CD4-positive, alpha-beta T cell (primary cell): ENCODE measurements at regions of chr11 and their contacts with region 1.

Region 1: GRCh38 chr11:10307442-10308207 is 2.8 kb downstream of the ADM start:
- DNase-seq: peak; percentile 70 to 92 (median 80)
- ATAC-seq: peak; percentile 66
- H3K4me3 ChIP-seq: peak overlapping the region; percentile 63
- H3K4me3 Mint-ChIP-seq: peak overlapping the region; percentile 95
- H3K27ac ChIP-seq: no peak overlapping the region
- H3K27ac Mint-ChIP-seq: no peak overlapping the region
- H3K4me1 ChIP-seq: peaks cover 56% of the 10 kb centered on the region
- H3K4me1 Mint-ChIP-seq: peaks cover 40% of the 10 kb centered on the region
- H3K27me3 ChIP-seq: peaks cover 32 to 45% of the 10 kb centered on the region in 2 experiments
- H3K27me3 Mint-ChIP-seq: peaks cover 80% of the 10 kb centered on the region
- CTCF ChIP-seq: peak; percentile 98

Region 2: DNA sequence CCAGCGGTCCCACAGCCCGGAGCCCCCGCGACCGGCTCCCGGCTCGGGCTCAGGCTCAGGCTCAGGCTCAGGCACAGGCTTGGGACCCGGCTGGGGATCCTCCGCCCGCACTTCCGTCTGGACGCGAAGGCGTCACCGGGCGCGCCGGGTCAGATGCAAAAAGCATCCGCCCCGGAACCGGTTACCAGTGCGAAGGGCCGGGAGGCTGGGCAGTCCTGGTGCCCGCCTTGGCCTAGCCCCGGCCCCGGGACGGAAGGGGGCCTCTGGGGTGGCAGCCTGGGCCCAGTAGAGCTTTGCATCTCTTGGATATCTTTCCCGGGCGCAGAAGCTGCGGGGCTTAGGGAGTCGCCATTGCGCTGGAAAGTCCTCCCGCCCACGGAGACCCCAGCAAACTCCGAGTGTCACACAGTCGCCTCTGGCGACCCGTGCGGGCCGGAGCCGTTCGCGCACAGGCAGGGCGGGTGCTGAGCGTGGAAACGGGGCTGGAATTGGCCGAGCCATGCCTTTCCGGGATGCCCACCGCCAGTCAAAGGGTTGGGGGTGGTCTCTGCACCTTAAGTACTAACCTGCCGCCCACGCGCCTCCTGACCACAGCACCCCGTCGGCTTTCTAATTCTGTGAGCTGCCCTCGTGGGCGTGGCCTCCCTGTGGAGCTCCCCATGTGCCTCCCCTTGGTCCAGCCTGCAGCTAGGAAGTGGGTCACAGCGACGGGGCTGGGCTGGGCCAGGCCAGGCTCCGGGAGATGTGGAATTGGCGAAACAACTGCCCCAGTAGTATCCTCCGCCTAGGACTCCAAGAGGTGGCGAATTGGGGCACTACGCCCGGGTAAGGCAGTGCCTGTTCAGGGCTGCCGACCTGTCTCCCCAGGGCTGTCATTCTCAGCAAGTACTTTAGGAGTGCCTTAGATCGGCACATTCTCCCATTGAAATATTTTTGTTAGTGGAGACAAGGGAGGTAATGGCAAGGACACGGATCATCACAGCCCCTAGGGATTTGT is 1343.0 kb before region 1 on chr11 and contains the start of gene TMEM9B:
- CTCF ChIA-PET with region 1: no interaction called
- POLR2A ChIA-PET with region 1: no interaction called
- intact Hi-C with region 1: loop called in 1 of 2 experiments (anchors 10 kb)
- DNase-seq: peak; percentile 50 to 87 (median 70)
- ATAC-seq: peak; percentile 72
- H3K4me3 ChIP-seq: peak within 1 kb of the TSS; percentile 98
- H3K4me3 Mint-ChIP-seq: peak within 1 kb of the TSS; percentile 97
- H3K27ac ChIP-seq: peak within 1 kb of the TSS; percentile 91 to 96
- H3K27ac Mint-ChIP-seq: peak within 1 kb of the TSS; percentile 97
- H3K4me1 ChIP-seq: peaks cover 28% of the 10 kb centered on the region
- H3K4me1 Mint-ChIP-seq: peaks cover 35% of the 10 kb centered on the region
- H3K27me3 ChIP-seq: no peaks in the 10 kb centered on the region
- H3K27me3 Mint-ChIP-seq: no peaks in the 10 kb centered on the region
- CTCF ChIP-seq: no peak
- total RNA-seq, gene TMEM9B: 20.5 to 22.1 TPM

Region 3: DNA sequence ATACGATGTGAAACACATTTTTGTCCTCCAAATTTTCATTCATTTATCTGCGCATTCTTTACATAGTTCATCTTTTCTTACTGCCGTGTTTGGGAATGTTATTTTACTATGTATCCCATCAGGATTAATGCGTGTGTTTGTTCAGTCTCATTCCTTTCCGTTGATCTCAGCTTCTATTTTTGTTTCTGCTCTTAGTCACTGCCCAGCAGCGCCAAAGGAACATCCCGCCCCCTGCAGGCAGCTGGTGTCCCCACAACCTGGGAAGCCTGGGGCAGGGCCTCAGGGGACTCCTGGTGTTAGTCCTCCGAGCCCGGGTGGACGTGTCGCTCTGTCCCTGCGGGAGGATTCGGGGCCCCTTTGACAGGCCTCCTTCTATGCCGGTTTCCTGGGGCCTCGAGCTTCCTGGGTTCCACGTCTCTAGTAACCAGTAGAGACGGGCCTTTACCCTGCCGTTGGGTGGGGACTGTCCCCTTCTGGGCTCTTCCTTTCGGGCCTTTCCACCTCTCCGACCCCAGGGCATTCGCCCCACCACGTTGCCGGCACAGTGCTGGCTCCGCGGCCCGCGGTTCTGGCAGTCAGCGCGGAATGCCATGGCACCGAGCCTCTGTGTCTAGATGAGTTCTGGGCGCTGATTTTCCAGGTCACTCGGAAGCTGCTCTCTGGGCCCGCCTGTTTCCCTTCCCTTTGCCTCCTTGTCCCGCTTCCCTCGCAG is 694.4 kb before region 1 on chr11:
- CTCF ChIA-PET with region 1: interaction called, 8 read pairs
- POLR2A ChIA-PET with region 1: no interaction called
- intact Hi-C with region 1: loop called (anchors 5 kb)
- DNase-seq: peak; percentile 74 to 90 (median 82)
- ATAC-seq: peak; percentile 46
- H3K4me3 ChIP-seq: peak overlapping the region; percentile 66
- H3K4me3 Mint-ChIP-seq: peak overlapping the region; percentile 95
- H3K27ac ChIP-seq: peak overlapping the region; percentile 71 to 86
- H3K27ac Mint-ChIP-seq: peak overlapping the region; percentile 89
- H3K4me1 ChIP-seq: peaks cover 19% of the 10 kb centered on the region
- H3K4me1 Mint-ChIP-seq: peaks cover 16% of the 10 kb centered on the region
- H3K27me3 ChIP-seq: no peaks in the 10 kb centered on the region
- H3K27me3 Mint-ChIP-seq: no peaks in the 10 kb centered on the region
- CTCF ChIP-seq: peak; percentile 84

Region 4: GRCh38 chr11:9861860-9862725 is 445.5 kb before region 1 on chr11:
- CTCF ChIA-PET with region 1: interaction called, 3 read pairs
- POLR2A ChIA-PET with region 1: no interaction called
- intact Hi-C with region 1: loop called (anchors 1 to 5 kb)
- DNase-seq: peak in 11 of 14 experiments; percentile 3 to 71 (median 13)
- ATAC-seq: peak; percentile 61
- H3K4me3 ChIP-seq: no peak overlapping the region
- H3K4me3 Mint-ChIP-seq: no peak overlapping the region
- H3K27ac ChIP-seq: no peak overlapping the region
- H3K27ac Mint-ChIP-seq: no peak overlapping the region
- H3K4me1 ChIP-seq: no peaks in the 10 kb centered on the region
- H3K4me1 Mint-ChIP-seq: peaks cover 10% of the 10 kb centered on the region
- H3K27me3 ChIP-seq: no peaks in the 10 kb centered on the region
- H3K27me3 Mint-ChIP-seq: no peaks in the 10 kb centered on the region
- CTCF ChIP-seq: peak; percentile 55

Region 5: DNA sequence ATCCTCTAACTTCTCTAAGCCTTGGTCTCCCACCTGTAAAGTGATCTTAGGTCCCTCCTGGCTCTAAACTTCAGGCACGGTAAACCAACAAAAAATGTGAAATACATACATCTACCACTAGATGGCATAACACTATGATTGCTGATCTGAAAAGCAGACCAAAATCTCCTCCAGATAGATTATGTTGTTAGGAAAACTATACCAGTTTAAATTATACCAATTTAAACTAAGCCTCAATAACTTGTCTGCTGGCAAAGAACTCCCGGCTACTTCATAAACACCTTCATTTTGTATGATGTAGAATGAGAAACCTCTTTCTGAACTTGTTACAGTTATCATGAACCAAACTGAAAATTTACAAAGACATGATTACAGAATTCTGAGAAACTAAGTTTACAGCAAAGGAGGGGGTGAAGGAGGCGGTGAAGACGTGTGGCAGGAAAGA is 99.5 kb before region 1 on chr11:
- CTCF ChIA-PET with region 1: interaction called, 44 read pairs
- POLR2A ChIA-PET with region 1: interaction called, 7 read pairs
- intact Hi-C with region 1: loop called (anchors 1 kb)
- DNase-seq: peak in 3 of 14 experiments; percentile 57 to 71 (median 70)
- ATAC-seq: peak; percentile 66
- H3K4me3 ChIP-seq: no peak overlapping the region
- H3K4me3 Mint-ChIP-seq: no peak overlapping the region
- H3K27ac ChIP-seq: no peak overlapping the region
- H3K27ac Mint-ChIP-seq: no peak overlapping the region
- H3K4me1 ChIP-seq: no peaks in the 10 kb centered on the region
- H3K4me1 Mint-ChIP-seq: no peaks in the 10 kb centered on the region
- H3K27me3 ChIP-seq: no peaks in the 10 kb centered on the region
- H3K27me3 Mint-ChIP-seq: no peaks in the 10 kb centered on the region
- CTCF ChIP-seq: peak; percentile 77